Activated CD4-positive, alpha-beta T cell treated with anti-CD3 and anti-CD28 coated beads, Interleukin-2, amount 10 ng/mL, durations not matched to agents 24 days and 14 days (primary cell): ENCODE measurements at regions of chr2 and their contacts with region 1.

Region 1: GRCh38 chr2:152025678-152026287 is 73.1 kb downstream of the CACNB4 start:
- DNase-seq: peak; percentile 94
- H3K4me3 Mint-ChIP-seq: peak overlapping the region; percentile 82
- H3K27ac Mint-ChIP-seq: no peak overlapping the region
- H3K4me1 Mint-ChIP-seq: peaks cover 3% of the 10 kb centered on the region
- H3K27me3 Mint-ChIP-seq: peaks cover 13% of the 10 kb centered on the region

Region 2: DNA sequence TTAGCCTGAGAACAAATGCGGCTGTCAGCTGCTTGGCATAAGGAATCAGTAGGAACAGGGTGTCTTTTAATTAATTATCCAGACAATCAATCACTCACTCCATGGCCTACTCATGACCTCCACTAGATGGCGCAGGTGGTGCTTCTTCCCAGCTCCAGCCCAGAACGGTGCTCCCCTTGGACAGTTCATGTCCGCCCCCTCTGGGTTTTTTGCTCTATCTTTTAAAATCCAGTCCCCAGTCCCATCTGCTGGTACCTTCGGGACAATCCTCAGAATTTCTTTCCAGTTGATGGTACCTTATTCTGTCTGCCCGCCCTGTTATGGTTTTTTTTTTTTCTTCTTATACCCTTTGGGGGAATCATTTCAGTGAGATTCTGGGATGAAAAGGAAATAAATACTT is 26.7 kb before region 1 on chr2:
- intact Hi-C with region 1: loop called (anchors 1 kb)
- DNase-seq: peak; percentile 77
- H3K4me3 Mint-ChIP-seq: no peak overlapping the region
- H3K27ac Mint-ChIP-seq: no peak overlapping the region
- H3K4me1 Mint-ChIP-seq: peaks cover under 1% of the 10 kb centered on the region
- H3K27me3 Mint-ChIP-seq: peaks cover 2% of the 10 kb centered on the region